GM10248 (cell line): ENCODE measurements at regions of chr15 and their contacts with region 1.

Region 1: DNA sequence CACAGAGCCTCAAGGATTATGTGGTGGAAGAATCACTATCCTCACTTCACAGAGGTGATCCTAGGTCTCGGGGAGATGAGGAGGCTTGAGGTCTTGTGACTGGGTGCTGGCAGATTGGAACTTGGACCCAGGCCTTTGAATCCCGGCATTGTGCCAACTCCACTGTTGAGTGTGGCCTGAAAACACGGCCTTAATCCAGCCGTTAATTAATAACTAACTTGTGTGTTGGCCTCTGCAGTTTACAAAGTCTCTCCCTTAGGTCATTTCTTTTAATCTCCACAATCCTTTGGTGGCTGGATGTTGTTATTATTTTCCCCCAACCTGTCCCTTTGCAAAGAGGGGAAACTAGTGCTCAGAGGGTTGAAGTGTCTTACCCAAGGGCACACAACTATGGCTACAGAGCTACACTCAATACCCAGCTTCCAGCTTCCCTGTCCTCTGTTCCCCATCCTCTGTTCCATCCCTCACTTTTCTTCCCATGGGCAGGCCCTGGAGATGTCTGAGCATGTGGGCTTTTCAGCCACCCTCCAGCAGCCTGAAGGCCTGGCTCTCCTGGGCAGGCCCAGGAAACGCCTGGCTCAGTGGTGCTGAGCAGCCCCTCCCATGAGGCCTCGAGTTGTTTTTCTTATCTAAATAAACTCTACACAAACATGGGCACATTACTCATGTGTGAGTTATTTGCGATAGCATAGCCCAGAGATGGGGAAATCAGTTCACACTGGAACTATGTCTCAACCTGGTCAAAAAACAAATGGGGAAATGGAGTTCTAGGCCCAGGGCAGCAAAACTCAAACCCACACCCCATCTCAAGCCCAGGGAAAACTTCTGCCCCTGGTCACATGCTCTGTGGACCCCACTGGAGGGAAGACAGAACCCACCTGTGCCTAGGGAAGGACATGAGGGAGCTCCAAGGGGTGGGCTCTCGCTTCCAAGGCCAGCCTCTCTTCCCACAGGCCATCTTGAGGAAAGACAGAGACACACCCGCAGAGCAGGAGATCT is 16.8 kb upstream of the SMAD3 start:
- DNase-seq: no peak
- CTCF ChIP-seq: no peak

Region 2: GRCh38 chr15:66714543-66714981 is 334.0 kb before region 1 on chr15:
- CTCF ChIA-PET with region 1: no interaction called
- POLR2A ChIA-PET with region 1: no interaction called
- DNase-seq: no peak
- CTCF ChIP-seq: no peak

Region 3: DNA sequence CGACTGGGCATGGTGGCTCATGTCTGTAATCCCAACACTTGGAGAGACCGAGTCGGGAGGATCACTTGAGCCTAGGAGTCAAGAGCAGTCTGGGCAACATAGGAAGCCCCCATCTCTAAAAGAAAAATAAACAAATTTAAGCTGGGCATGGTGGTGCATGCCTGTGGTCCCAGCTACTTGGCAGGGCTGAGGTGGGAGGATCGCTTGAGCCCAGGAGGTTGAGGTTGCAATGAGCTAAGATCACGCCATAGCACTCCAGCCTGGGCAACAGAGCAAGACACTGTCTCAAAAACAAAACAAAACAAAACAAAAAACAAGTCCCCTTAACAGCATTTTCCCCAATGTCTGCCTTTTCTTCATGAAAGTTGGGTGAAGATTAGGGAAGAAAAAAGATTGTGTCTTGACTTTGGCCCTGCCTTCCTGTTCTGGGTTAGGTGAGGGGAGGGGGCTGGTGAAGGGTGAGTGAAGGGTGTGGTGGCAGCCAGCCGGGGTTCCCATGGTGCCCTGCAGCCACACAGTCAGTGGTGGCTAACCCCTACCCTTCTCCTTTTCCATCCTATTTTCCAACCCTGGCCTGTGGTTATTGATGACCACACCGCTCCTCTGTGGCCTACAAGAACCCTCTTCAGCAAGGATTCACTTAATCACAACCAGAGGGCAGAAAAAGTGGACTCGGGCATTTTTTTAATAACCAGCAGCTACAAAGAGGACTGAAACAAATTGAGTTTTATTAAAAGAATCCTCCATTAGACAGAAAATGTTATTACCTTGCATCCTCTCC is 11.6 kb before region 1 on chr15:
- CTCF ChIA-PET with region 1: interaction called, 12 read pairs
- POLR2A ChIA-PET with region 1: no interaction called
- DNase-seq: no peak
- CTCF ChIP-seq: no peak